ENCODE measurements at regions of chr1 and their contacts with region 1.

Region 1: GRCh38 chr1:8348777-8349491 is 31.0 kb downstream of the SLC45A1 start:
- DNase-seq: peak; percentile 91
- H3K4me3 ChIP-seq: no peak overlapping the region; a peak in 1 of 4 replicates
- H3K27ac ChIP-seq: no peak overlapping the region
- H3K4me1 ChIP-seq: peaks cover under 1 to 13% of the 10 kb centered on the region in 2 experiments; a peak in 2 of 4 replicates
- H3K27me3 ChIP-seq: no peaks in the 10 kb centered on the region
- CTCF ChIP-seq: peak; percentile 72
- EP300 ChIP-seq: no peak
- RAD21 ChIP-seq: peak; percentile 78

Region 2: DNA sequence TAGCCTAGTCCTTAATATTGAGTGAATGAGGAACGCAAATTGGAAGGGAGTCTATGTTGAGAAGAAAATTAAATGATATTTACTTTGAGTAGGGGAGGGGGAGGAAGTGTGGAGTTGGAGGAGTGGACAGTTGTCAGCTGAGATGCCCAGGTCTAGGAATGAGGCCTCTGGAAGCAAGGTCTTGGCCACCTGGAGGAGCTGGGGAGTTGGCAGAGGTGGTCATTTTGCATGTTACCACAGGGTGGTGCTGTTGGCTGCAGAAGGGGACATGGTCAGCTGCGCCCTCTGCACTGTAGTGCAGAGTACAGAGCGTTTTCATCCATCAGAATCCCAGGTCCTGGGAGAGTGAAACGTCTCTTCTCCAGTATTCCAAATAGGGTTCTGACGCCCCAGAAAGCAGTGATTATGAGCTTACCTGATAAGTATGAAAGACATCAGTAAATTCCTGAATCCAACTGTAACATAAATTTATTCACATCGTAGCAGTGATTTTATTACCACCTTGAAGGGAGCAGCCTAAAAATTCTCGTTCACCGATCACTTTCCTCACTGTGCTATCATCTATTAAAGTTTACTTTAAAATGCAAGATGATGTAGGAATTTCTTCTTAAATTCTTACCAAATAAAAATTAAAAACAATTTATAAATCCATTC is 373.6 kb before region 1 on chr1:
- CTCF ChIA-PET with region 1: interaction called, 37 read pairs
- POLR2A ChIA-PET with region 1: no interaction called
- DNase-seq: peak; percentile 86
- H3K4me3 ChIP-seq: no peak overlapping the region
- H3K27ac ChIP-seq: no peak overlapping the region
- H3K4me1 ChIP-seq: no peaks in the 10 kb centered on the region
- H3K27me3 ChIP-seq: no peaks in the 10 kb centered on the region
- CTCF ChIP-seq: peak; percentile 79
- EP300 ChIP-seq: no peak
- RAD21 ChIP-seq: peak; percentile 81

Region 3: GRCh38 chr1:7983086-7983778 is 365.7 kb before region 1 on chr1:
- CTCF ChIA-PET with region 1: interaction called, 37 read pairs
- POLR2A ChIA-PET with region 1: no interaction called
- DNase-seq: no peak
- H3K4me3 ChIP-seq: no peak overlapping the region
- H3K27ac ChIP-seq: no peak overlapping the region
- H3K4me1 ChIP-seq: no peaks in the 10 kb centered on the region; a peak in 1 of 4 replicates
- H3K27me3 ChIP-seq: no peaks in the 10 kb centered on the region
- CTCF ChIP-seq: no peak
- EP300 ChIP-seq: no peak
- RAD21 ChIP-seq: no peak

Region 4: GRCh38 chr1:8113262-8114220 is 235.4 kb before region 1 on chr1:
- CTCF ChIA-PET with region 1: no interaction called
- POLR2A ChIA-PET with region 1: no interaction called
- DNase-seq: no peak
- H3K4me3 ChIP-seq: no peak overlapping the region
- H3K27ac ChIP-seq: no peak overlapping the region
- H3K4me1 ChIP-seq: 0 out of 4 replicates have a peak, but pooled peaks cover 0 to 4% of the 10 kb centered on the region in 2 experiments
- H3K27me3 ChIP-seq: no peaks in the 10 kb centered on the region
- CTCF ChIP-seq: no peak
- EP300 ChIP-seq: no peak
- RAD21 ChIP-seq: no peak

Region 5: DNA sequence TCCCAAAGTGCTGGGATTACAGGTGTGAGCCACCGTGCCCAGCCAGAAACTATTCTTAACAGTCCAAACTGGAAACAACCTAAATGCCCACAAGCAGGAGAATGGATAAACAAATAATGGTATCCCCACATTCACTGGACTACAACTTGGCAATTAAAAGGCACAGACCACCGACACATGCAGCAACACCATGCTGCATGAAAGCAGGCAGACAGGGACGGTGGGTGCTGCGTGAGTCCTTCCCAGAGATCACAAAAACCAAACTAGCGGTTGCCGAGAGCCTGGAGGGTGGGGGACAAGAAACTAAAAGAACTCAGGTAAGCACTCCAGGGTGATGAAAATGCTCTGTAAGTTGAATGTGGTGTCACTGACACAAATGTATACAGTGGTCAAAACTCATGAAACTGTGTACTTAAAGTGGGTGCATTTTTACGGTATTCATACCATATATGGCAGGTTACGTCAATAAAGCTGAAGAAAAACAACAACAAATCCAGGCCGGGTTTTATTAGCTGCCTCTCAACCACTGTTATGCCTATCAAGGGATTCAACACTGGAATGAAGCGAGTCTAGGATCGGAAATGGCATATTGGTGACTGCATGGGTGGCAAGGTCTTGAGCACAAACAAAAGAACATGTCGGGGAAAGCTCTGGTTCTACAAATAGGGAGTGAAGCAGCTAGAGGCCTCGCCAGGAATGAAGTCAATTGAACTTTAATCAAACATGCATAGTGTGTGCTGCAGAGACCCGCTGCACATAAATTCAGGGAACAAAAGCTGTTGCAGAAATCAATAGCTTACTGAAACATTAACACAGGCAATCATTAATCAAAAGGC is 21.3 kb after region 1 on chr1:
- CTCF ChIA-PET with region 1: interaction called, 23 read pairs
- POLR2A ChIA-PET with region 1: no interaction called
- DNase-seq: no peak
- H3K4me3 ChIP-seq: no peak overlapping the region
- H3K27ac ChIP-seq: peak overlapping the region; percentile 50 to 90; a peak in 2 of 4 replicates
- H3K4me1 ChIP-seq: peaks cover 45 to 62% of the 10 kb centered on the region in 2 experiments
- H3K27me3 ChIP-seq: no peaks in the 10 kb centered on the region
- CTCF ChIP-seq: no peak
- EP300 ChIP-seq: no peak
- RAD21 ChIP-seq: no peak